ENCODE measurements at regions of chr12 and their contacts with region 1.

Region 1: GRCh38 chr12:114232187-114232586 is 173.8 kb downstream of the TBX5 start:
- DNase-seq: no peak
- H3K4me3 ChIP-seq: no peak overlapping the region
- H3K27ac ChIP-seq: no peak overlapping the region
- H3K4me1 ChIP-seq: no peaks in the 10 kb centered on the region
- H3K27me3 ChIP-seq: no peaks in the 10 kb centered on the region
- CTCF ChIP-seq: no peak

Region 2: GRCh38 chr12:114174326-114174725 is 57.9 kb before region 1 on chr12:
- CTCF ChIA-PET with region 1: no interaction called
- dilution Hi-C with region 1: loop called (anchors 5 kb)
- in situ Hi-C with region 1: no loop called
- intact Hi-C with region 1: no loop called
- DNase-seq: no peak
- H3K4me3 ChIP-seq: no peak overlapping the region
- H3K27ac ChIP-seq: no peak overlapping the region
- H3K4me1 ChIP-seq: no peaks in the 10 kb centered on the region
- H3K27me3 ChIP-seq: no peaks in the 10 kb centered on the region
- CTCF ChIP-seq: no peak